Activated CD8-positive, alpha-beta memory T cell treated with anti-CD3 and anti-CD28 coated beads, Interleukin-2, amount 10 ng/mL, durations not matched to agents 7 days and 5 days (primary cell): ENCODE measurements at regions of chr6 and their contacts with region 1.

Region 1: GRCh38 chr6:116531675-116532570 is 13.6 kb downstream of the TRAPPC3L start:
- DNase-seq: peak; percentile 75
- ATAC-seq: peak; percentile 87
- H3K4me3 Mint-ChIP-seq: no peak overlapping the region
- H3K27ac Mint-ChIP-seq: no peak overlapping the region
- H3K4me1 Mint-ChIP-seq: peaks cover 3% of the 10 kb centered on the region
- H3K27me3 Mint-ChIP-seq: peaks cover 53% of the 10 kb centered on the region

Region 2: GRCh38 chr6:116287689-116288282 is 244.1 kb before region 1 on chr6:
- CTCF ChIA-PET with region 1: interaction called, 46 read pairs
- DNase-seq: no peak
- ATAC-seq: peak; percentile 55
- H3K4me3 Mint-ChIP-seq: no peak overlapping the region
- H3K27ac Mint-ChIP-seq: no peak overlapping the region
- H3K4me1 Mint-ChIP-seq: no peaks in the 10 kb centered on the region
- H3K27me3 Mint-ChIP-seq: no peaks in the 10 kb centered on the region

Region 3: DNA sequence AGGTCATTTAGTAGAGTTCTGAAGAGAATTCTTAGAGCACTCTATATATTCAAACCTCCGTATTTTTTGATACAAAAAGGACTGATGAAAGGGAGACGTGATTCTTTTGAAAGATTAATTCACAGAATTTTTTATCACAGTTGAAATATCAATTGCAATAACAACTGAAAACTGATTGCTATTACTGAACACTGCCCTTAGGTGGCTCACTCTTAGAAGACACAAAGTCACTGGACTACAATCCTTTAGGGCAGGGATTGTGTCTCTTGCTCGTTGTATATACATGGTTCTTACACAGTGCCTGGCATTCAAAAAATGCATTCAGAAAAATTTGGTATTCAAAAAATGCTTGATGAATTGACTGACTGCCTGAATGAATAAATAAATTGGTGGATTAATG is 87.8 kb before region 1 on chr6:
- CTCF ChIA-PET with region 1: interaction called, 11 read pairs
- DNase-seq: no peak
- ATAC-seq: peak; percentile 74
- H3K4me3 Mint-ChIP-seq: no peak overlapping the region
- H3K27ac Mint-ChIP-seq: no peak overlapping the region
- H3K4me1 Mint-ChIP-seq: peaks cover 27% of the 10 kb centered on the region
- H3K27me3 Mint-ChIP-seq: peaks cover 19% of the 10 kb centered on the region